Activated CD4-positive, alpha-beta memory T cell treated with anti-CD3 and anti-CD28 coated beads, Interleukin-2, amount 10 ng/mL, durations not matched to agents 7 days and 5 days (primary cell): ENCODE measurements at regions of chr3 and their contacts with region 1.

Region 1: GRCh38 chr3:36993326-36994283 is at the start of gene MLH1:
- DNase-seq: peak; percentile 99
- H3K4me3 Mint-ChIP-seq: no peak within 1 kb of the TSS
- H3K27ac Mint-ChIP-seq: no peak within 1 kb of the TSS
- H3K4me1 Mint-ChIP-seq: peaks cover 37% of the 10 kb centered on the region
- H3K27me3 Mint-ChIP-seq: no peaks in the 10 kb centered on the region
- total RNA-seq, gene MLH1: 50.9 to 57.5 TPM

Region 2: GRCh38 chr3:36876181-36876936 is 117.2 kb before region 1 on chr3:
- CTCF ChIA-PET with region 1: interaction called, 3 read pairs
- POLR2A ChIA-PET with region 1: interaction called, 23 read pairs
- DNase-seq: peak; percentile 38
- H3K4me3 Mint-ChIP-seq: peak overlapping the region; percentile 60
- H3K27ac Mint-ChIP-seq: peak overlapping the region; percentile 86
- H3K4me1 Mint-ChIP-seq: peaks cover 25% of the 10 kb centered on the region
- H3K27me3 Mint-ChIP-seq: peaks cover 5% of the 10 kb centered on the region

Region 3: GRCh38 chr3:36911990-36912804 is 81.4 kb before region 1 on chr3:
- CTCF ChIA-PET with region 1: interaction called, 5 read pairs
- POLR2A ChIA-PET with region 1: interaction called, 41 read pairs
- DNase-seq: peak; percentile 39
- H3K4me3 Mint-ChIP-seq: peak overlapping the region; percentile 74
- H3K27ac Mint-ChIP-seq: peak overlapping the region; percentile 90
- H3K4me1 Mint-ChIP-seq: peaks cover 41% of the 10 kb centered on the region
- H3K27me3 Mint-ChIP-seq: peaks cover 5% of the 10 kb centered on the region

Region 4: GRCh38 chr3:36944012-36944640 is 49.5 kb before region 1 on chr3:
- CTCF ChIA-PET with region 1: interaction called, 3 read pairs
- POLR2A ChIA-PET with region 1: interaction called, 13 read pairs
- DNase-seq: peak; percentile 30
- H3K4me3 Mint-ChIP-seq: peak overlapping the region; percentile 74
- H3K27ac Mint-ChIP-seq: no peak overlapping the region
- H3K4me1 Mint-ChIP-seq: peaks cover 9% of the 10 kb centered on the region
- H3K27me3 Mint-ChIP-seq: peaks cover 4% of the 10 kb centered on the region

Region 5: GRCh38 chr3:36969540-36970432 is 23.8 kb before region 1 on chr3:
- CTCF ChIA-PET with region 1: interaction called, 6 read pairs
- POLR2A ChIA-PET with region 1: interaction called, 26 read pairs
- DNase-seq: peak; percentile 48
- H3K4me3 Mint-ChIP-seq: no peak overlapping the region
- H3K27ac Mint-ChIP-seq: peak overlapping the region; percentile 17
- H3K4me1 Mint-ChIP-seq: peaks cover 31% of the 10 kb centered on the region
- H3K27me3 Mint-ChIP-seq: no peaks in the 10 kb centered on the region